Activated naive CD8-positive, alpha-beta T cell treated with anti-CD3 and anti-CD28 coated beads, Interleukin-2, amount 10 ng/mL, durations not matched to agents 7 days and 5 days (primary cell): ENCODE measurements at regions of chr7 and their contacts with region 1.

Region 1: DNA sequence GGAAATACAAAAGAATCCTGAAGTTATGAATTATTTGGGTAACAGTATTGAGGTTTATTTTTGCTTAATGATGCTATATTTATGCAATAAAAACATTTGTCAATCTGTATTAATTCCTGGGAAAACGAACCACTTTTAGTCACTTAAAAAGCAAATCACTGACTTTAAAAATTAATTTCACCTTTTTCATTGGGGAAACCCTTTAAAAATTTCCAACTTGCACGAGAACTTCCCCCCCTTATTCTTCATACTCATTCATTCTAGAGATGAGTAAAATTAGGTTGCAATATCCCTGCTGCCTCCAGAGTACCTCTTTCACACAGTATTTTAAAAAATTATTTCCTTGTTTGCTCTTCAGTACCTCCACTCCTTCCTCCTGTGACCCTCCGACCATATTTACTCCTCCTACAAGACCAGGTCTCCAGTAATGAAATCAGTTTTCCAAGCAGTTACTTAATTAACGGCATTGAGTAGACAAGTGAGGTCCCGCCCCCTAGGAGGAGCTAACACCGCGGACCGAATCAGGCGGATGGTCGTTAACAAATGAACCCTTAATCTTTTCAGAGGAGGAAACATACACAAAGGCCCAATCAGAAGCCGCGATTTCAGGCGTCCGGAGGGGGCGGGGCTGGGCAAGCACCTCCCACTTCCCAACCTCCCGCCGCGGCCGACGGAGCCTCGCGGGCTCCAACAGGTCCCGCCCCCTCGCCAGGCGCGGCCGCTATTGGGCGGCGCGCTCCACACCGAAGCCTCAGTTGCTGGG is 465 bp upstream of the TRIM24 start:
- DNase-seq: peak; percentile 98
- ATAC-seq: peak; percentile 75
- H3K4me3 Mint-ChIP-seq: peak overlapping the region; percentile 92
- H3K27ac Mint-ChIP-seq: peak overlapping the region; percentile 85
- H3K4me1 Mint-ChIP-seq: peaks cover 17% of the 10 kb centered on the region
- H3K27me3 Mint-ChIP-seq: no peaks in the 10 kb centered on the region

Region 2: GRCh38 chr7:138478499-138478908 is 18.9 kb after region 1 on chr7:
- POLR2A ChIA-PET with region 1: no interaction called
- DNase-seq: no peak
- ATAC-seq: peak; percentile 39
- H3K4me3 Mint-ChIP-seq: no peak overlapping the region
- H3K27ac Mint-ChIP-seq: no peak overlapping the region
- H3K4me1 Mint-ChIP-seq: peaks cover 32% of the 10 kb centered on the region
- H3K27me3 Mint-ChIP-seq: no peaks in the 10 kb centered on the region

Region 3: DNA sequence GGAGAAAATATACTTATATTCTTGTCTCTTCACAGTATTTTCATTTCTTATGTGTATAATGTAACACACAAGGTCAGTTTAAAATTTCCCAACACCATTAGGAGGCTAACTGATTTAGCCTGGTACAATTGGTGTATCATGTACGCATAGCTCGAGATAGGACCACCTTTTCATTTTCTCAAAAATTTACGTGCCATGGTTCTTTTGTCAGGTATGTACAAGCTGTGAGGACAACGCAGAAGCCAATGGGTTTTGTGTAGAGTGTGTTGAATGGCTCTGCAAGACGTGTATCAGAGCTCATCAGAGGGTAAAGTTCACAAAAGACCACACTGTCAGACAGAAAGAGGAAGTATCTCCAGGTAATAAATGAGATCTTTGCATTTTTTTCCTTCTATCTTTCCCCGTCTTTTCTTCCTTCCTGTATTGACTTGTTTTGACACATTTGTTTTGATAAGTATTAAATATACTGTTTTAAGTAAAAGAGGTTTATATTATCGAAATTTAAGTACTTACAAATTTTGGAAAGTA is 55.5 kb after region 1 on chr7:
- POLR2A ChIA-PET with region 1: no interaction called
- DNase-seq: no peak
- ATAC-seq: no peak
- H3K4me3 Mint-ChIP-seq: no peak overlapping the region
- H3K27ac Mint-ChIP-seq: no peak overlapping the region
- H3K4me1 Mint-ChIP-seq: no peaks in the 10 kb centered on the region
- H3K27me3 Mint-ChIP-seq: no peaks in the 10 kb centered on the region

Region 4: GRCh38 chr7:138625849-138626230 is 166.2 kb after region 1 on chr7:
- POLR2A ChIA-PET with region 1: interaction called, 17 read pairs
- DNase-seq: no peak
- ATAC-seq: peak; percentile 94
- H3K4me3 Mint-ChIP-seq: peak overlapping the region; percentile 71
- H3K27ac Mint-ChIP-seq: peak overlapping the region; percentile 96
- H3K4me1 Mint-ChIP-seq: peaks cover 43% of the 10 kb centered on the region
- H3K27me3 Mint-ChIP-seq: no peaks in the 10 kb centered on the region